K562 (cell line): ENCODE measurements at regions of chr1 and their contacts with region 1.

Region 1: GRCh38 chr1:50774759-50775351 is 185.2 kb downstream of the FAF1 start:
- DNase-seq: peak; percentile 39 to 75 (median 48)
- ATAC-seq: peak; percentile 86
- H3K4me3 ChIP-seq: no peak overlapping the region
- H3K27ac ChIP-seq: no peak overlapping the region
- H3K4me1 ChIP-seq: no peaks in the 10 kb centered on the region; a peak in 1 of 5 replicates
- H3K27me3 ChIP-seq: no peaks in the 10 kb centered on the region
- CTCF ChIP-seq: peak; percentile 49 to 81 (median 73); a peak in 5 of 6 replicates
- EP300 ChIP-seq: no peak
- POLR2A ChIP-seq: no peak
- RAD21 ChIP-seq: peak; percentile 79 to 81

Region 2: DNA sequence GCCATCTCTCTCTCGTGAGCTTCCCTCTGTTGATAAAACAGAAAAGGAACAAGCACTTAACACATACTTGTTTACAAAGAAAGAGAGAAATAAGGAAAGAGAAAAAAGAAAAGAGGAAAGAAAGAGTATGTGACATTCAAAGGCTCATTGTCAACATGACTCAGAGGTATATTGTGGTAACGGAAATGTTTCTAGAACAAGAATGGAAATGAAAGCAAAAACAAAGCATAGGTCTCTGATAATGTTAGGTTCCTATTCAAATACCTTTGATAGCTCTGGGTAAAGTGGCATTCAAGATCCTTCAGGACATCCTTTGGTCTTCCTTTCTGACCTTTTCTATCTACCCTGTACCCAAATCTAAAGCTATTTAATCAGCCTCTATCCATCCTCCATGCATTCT is 284.2 kb before region 1 on chr1:
- CTCF ChIA-PET with region 1: no interaction called
- POLR2A ChIA-PET with region 1: no interaction called
- in situ Hi-C with region 1: no loop called
- intact Hi-C with region 1: no loop called
- DNase-seq: no peak
- ATAC-seq: no peak
- H3K4me3 ChIP-seq: no peak overlapping the region
- H3K27ac ChIP-seq: no peak overlapping the region
- H3K4me1 ChIP-seq: no peaks in the 10 kb centered on the region
- H3K27me3 ChIP-seq: no peaks in the 10 kb centered on the region
- CTCF ChIP-seq: no peak
- EP300 ChIP-seq: no peak
- POLR2A ChIP-seq: no peak
- RAD21 ChIP-seq: no peak

Region 3: DNA sequence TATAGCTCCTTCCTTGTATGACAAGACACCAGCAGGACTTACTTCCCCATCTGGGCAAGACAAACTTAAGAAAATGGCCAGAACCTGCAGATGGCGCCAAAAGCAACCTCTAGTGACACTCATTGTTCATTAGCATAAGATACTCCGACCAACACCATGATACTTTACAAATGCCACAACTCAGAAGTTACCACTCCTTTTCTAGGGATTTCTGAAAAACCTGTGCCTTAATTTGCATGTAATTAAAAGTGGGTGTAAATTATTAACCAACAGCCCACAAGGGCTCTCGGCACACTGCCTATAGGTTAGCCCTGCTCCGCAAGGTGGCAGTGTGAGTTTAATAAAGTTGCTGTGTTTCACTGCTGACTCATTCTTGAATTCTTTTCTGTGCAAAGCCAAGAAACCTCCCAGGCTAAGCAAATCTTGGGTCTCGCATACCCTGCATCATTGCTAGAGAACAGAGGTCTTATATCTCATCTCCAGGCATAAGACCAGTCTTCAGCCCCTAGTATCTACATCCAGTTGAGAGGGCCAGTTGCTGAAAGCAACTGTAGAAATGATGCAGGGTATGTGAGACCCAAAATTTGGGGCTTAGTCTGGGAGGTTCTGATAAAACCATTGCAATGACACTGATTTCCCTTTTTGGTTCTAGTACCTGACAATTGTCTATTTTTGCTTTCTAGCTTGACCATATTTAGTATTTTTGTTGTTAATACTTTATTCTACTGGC is 98.8 kb after region 1 on chr1:
- CTCF ChIA-PET with region 1: no interaction called
- POLR2A ChIA-PET with region 1: no interaction called
- in situ Hi-C with region 1: no loop called
- intact Hi-C with region 1: loop called (anchors 1 kb)
- DNase-seq: peak; percentile 51 to 91 (median 62)
- ATAC-seq: peak; percentile 96
- H3K4me3 ChIP-seq: peak overlapping the region; percentile 37
- H3K27ac ChIP-seq: peak overlapping the region; percentile 67
- H3K4me1 ChIP-seq: peaks cover 0 to 3% of the 10 kb centered on the region in 2 experiments; a peak in 2 of 5 replicates
- H3K27me3 ChIP-seq: no peaks in the 10 kb centered on the region
- CTCF ChIP-seq: peak; percentile 93 to 98 (median 97)
- EP300 ChIP-seq: peak; percentile 45; the same call in 1 of the 2 replicates
- POLR2A ChIP-seq: no peak
- RAD21 ChIP-seq: peak; percentile 87 to 88

Region 4: GRCh38 chr1:50930193-50930592 is 155.3 kb after region 1 on chr1:
- CTCF ChIA-PET with region 1: no interaction called
- POLR2A ChIA-PET with region 1: no interaction called
- in situ Hi-C with region 1: no loop called
- intact Hi-C with region 1: no loop called
- DNase-seq: no peak
- ATAC-seq: no peak
- H3K4me3 ChIP-seq: no peak overlapping the region
- H3K27ac ChIP-seq: no peak overlapping the region
- H3K4me1 ChIP-seq: peaks cover 0 to 3% of the 10 kb centered on the region in 2 experiments; a peak in 1 of 5 replicates
- H3K27me3 ChIP-seq: no peaks in the 10 kb centered on the region
- CTCF ChIP-seq: no peak
- EP300 ChIP-seq: no peak
- POLR2A ChIP-seq: no peak
- RAD21 ChIP-seq: no peak

Region 5: GRCh38 chr1:50959913-50960844 is 185.3 kb after region 1 on chr1 and contains the start of gene FAF1:
- CTCF ChIA-PET with region 1: no interaction called
- POLR2A ChIA-PET with region 1: interaction called, 3 read pairs
- in situ Hi-C with region 1: no loop called
- intact Hi-C with region 1: loop called (anchors 10 kb)
- DNase-seq: peak; percentile 94 to 100 (median 96)
- ATAC-seq: peak; percentile 88
- H3K4me3 ChIP-seq: peak within 1 kb of the TSS; percentile 62
- H3K27ac ChIP-seq: peak within 1 kb of the TSS; percentile 85
- H3K4me1 ChIP-seq: peaks cover 9 to 15% of the 10 kb centered on the region in 2 experiments; a peak in 4 of 5 replicates
- H3K27me3 ChIP-seq: no peaks in the 10 kb centered on the region
- CTCF ChIP-seq: peak; percentile 34 to 60 (median 56)
- EP300 ChIP-seq: peak; percentile 58
- POLR2A ChIP-seq: peak; percentile 94
- RAD21 ChIP-seq: peak in 1 of 2 experiments; percentile 20; a peak in 2 of 4 replicates
- polyA plus RNA-seq, gene FAF1: 48.7 to 60.9 TPM

Region 6: DNA sequence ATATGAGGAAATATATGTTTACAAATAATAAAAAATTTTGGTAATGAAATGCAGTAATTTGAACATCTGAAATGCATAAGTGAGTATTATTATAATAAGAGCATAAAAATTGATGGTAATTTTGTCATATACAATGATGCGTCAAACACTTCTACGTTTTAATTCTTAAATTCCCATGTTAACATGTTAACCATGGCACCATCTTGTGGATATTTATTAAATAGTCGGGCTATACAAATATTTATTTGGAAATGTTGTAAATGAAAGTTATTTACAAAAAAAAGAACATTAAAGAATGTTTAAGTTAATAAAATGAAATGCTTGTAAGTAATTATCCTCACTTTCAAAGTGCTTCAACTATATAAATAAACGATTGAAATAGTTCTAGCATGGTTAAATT is 270.0 kb after region 1 on chr1:
- CTCF ChIA-PET with region 1: interaction called, 3 read pairs
- POLR2A ChIA-PET with region 1: no interaction called
- in situ Hi-C with region 1: loop called (anchors 10 kb)
- intact Hi-C with region 1: loop called (anchors 2 kb)
- DNase-seq: peak in 2 of 4 experiments; percentile 17 to 21
- ATAC-seq: peak; percentile 65; the same call in 2 of the 3 replicates
- H3K4me3 ChIP-seq: no peak overlapping the region
- H3K27ac ChIP-seq: no peak overlapping the region
- H3K4me1 ChIP-seq: no peaks in the 10 kb centered on the region
- H3K27me3 ChIP-seq: no peaks in the 10 kb centered on the region
- CTCF ChIP-seq: peak; percentile 10 to 76 (median 26); a peak in 3 of 6 replicates
- EP300 ChIP-seq: no peak
- POLR2A ChIP-seq: no peak
- RAD21 ChIP-seq: peak; percentile 71 to 76

Region 7: GRCh38 chr1:51058858-51059257 is 284.0 kb after region 1 on chr1:
- CTCF ChIA-PET with region 1: no interaction called
- POLR2A ChIA-PET with region 1: no interaction called
- in situ Hi-C with region 1: loop called (anchors 10 kb)
- intact Hi-C with region 1: no loop called
- DNase-seq: peak in 3 of 4 experiments; percentile 12 to 50 (median 17)
- ATAC-seq: peak; percentile 96
- H3K4me3 ChIP-seq: no peak overlapping the region
- H3K27ac ChIP-seq: no peak overlapping the region
- H3K4me1 ChIP-seq: peaks cover 0 to 5% of the 10 kb centered on the region in 2 experiments; a peak in 1 of 5 replicates
- H3K27me3 ChIP-seq: no peaks in the 10 kb centered on the region
- CTCF ChIP-seq: peak; percentile 48 to 73 (median 49); a peak in 5 of 6 replicates
- EP300 ChIP-seq: no peak
- POLR2A ChIP-seq: no peak
- RAD21 ChIP-seq: peak in 1 of 2 experiments; percentile 64; a peak in 2 of 4 replicates

Region 8: GRCh38 chr1:51192213-51192843 is 417.5 kb after region 1 on chr1:
- CTCF ChIA-PET with region 1: interaction called, 22 read pairs
- POLR2A ChIA-PET with region 1: interaction called, 3 read pairs
- in situ Hi-C with region 1: loop called (anchors 5 kb)
- intact Hi-C with region 1: loop called (anchors 1 kb)
- DNase-seq: peak; percentile 65 to 86 (median 70)
- ATAC-seq: peak; percentile 90
- H3K4me3 ChIP-seq: no peak overlapping the region
- H3K27ac ChIP-seq: no peak overlapping the region
- H3K4me1 ChIP-seq: peaks cover 0 to 3% of the 10 kb centered on the region in 2 experiments; a peak in 1 of 5 replicates
- H3K27me3 ChIP-seq: no peaks in the 10 kb centered on the region
- CTCF ChIP-seq: peak; percentile 79 to 91 (median 81)
- EP300 ChIP-seq: no peak
- POLR2A ChIP-seq: no peak
- RAD21 ChIP-seq: peak; percentile 72 to 82